Dendritic cell treated with granulocyte-macrophage colony-stimulating factor and Interleukin-4, amounts not matched to agents 40 ng/mL and 50 ng/mL, for 4 days (primary cell): ENCODE measurements at regions of chr11 and their contacts with region 1.

Region 1: GRCh38 chr11:64225612-64226506 is at the starts of genes NUDT22 and TRPT1:
- H3K4me3 Mint-ChIP-seq: peak within 1 kb of the TSS; percentile 85
- H3K27ac Mint-ChIP-seq: peak within 1 kb of the TSS; percentile 92
- H3K4me1 Mint-ChIP-seq: peaks cover 61% of the 10 kb centered on the region
- H3K27me3 Mint-ChIP-seq: no peaks in the 10 kb centered on the region

Region 2: DNA sequence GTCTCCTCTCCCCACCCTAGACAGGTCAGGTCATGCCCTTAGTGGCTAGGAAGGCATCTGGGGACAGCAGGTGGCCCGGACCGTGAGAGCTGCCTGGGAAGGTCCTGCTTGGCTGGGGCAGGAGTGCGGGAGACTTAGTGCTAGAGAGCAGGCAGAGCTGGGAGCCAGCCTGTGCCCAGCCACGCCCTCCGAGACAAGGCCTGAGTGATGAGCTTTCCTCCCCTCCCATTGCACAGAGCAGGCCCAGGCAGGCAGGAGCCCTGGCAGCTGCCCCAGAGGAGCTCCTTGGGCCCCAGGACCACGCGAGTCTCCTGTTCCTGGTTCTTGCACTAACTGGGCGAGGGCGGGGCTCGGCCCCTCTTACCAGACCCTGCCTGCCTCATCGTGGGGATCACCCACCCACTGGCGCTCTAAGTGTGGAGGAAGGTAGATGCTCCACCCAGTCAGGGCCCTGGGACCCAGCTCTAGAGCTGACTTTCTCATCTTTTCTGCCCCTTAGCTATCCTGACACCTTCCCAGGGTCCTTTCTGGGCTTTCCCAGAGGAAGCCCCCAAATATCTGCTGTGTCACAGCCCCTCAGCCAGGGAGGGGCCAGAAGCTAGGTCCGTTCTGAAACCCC is 104.8 kb before region 1 on chr11:
- intact Hi-C with region 1: no loop called
- H3K4me3 Mint-ChIP-seq: no peak overlapping the region
- H3K27ac Mint-ChIP-seq: no peak overlapping the region
- H3K4me1 Mint-ChIP-seq: peaks cover 22% of the 10 kb centered on the region
- H3K27me3 Mint-ChIP-seq: peaks cover 37% of the 10 kb centered on the region

Region 3: GRCh38 chr11:64240394-64241174 is 14.7 kb after region 1 on chr11 and contains the start of gene FKBP2:
- intact Hi-C with region 1: loop called (anchors 1 kb)
- H3K4me3 Mint-ChIP-seq: peak within 1 kb of the TSS; percentile 83
- H3K27ac Mint-ChIP-seq: peak within 1 kb of the TSS; percentile 99
- H3K4me1 Mint-ChIP-seq: peaks cover 83% of the 10 kb centered on the region
- H3K27me3 Mint-ChIP-seq: no peaks in the 10 kb centered on the region

Region 4: DNA sequence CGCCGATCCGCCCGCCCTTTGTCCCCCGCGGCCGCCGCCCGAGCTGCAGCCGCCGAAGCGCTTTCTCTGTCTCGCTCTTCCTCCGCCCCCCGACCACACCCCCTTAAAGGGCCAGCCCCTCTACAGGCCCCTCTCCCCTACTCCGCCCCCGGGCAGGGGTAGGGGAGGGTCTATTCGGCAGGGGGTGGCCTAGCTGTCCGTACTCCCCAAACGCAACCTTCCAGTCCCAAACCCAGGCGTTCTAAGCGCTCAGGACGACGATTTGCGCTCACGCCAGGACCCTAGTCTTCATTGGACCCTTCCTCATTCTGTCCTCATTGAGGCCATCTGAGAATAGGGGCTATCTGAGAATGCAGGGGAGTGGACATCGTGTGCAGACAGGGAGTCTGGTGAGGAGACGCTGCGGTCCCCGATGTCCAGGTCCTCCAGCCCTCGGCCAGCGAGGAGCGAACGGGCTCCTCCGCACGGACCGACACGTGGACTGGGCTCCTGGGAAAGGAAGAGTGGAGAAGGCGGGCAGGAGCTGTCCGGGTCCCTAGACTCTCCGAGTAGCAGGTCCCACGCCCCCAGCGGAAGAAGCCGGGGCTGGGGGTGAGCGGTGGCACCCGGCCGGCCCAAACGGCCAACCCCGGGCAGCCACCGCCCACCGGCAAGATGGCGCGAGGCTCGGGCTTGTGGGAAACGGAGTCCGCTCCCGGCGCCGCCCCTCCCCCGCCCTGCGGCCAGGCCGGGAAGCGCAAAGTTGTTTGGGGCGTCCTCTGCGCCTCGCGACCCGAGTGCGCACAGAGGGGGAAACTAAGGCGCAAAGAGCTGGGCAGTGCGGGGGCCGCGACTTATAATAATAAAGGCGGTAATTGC is 21.2 kb after region 1 on chr11 and contains the start of gene PPP1R14B:
- intact Hi-C with region 1: loop called (anchors 2 kb)
- H3K4me3 Mint-ChIP-seq: peak within 1 kb of the TSS; percentile 89
- H3K27ac Mint-ChIP-seq: peak within 1 kb of the TSS; percentile 92
- H3K4me1 Mint-ChIP-seq: peaks cover 77% of the 10 kb centered on the region
- H3K27me3 Mint-ChIP-seq: peaks cover 9% of the 10 kb centered on the region